Activated naive CD4-positive, alpha-beta T cell treated with anti-CD3 and anti-CD28 coated beads, Interleukin-2, amount 10 ng/mL, durations not matched to agents 7 days and 5 days (primary cell): ENCODE measurements at regions of chr17 and their contacts with region 1.

Region 1: DNA sequence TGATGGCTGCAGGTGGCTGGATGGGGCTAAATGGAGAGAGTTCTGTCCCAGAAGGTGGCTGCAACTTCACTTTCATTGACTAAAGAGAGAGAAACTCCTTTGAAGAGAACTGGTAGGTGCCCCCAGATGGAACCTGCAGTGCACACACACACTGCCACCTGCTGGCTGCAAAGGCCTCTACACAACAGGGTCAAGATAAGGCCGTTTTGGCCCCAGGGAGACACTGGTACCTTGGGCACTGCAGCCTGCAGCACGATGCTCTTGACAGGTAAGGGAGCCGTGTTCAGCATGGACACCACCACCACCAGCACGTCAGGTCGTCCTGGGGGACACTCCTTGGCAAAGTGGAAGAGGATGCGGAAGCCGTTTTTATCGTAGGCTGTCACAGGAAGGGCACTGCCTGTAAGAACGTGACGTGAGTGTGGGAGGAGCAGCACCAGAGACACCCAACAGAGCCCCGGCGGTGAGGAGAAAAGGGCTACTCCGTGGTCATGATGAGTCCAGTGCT is 22.7 kb downstream of the GGA3 start:
- DNase-seq: peak; percentile 72
- H3K4me3 Mint-ChIP-seq: peak overlapping the region; percentile 46
- H3K27ac Mint-ChIP-seq: peak overlapping the region; percentile 47
- H3K4me1 Mint-ChIP-seq: peaks cover 19% of the 10 kb centered on the region
- H3K27me3 Mint-ChIP-seq: no peaks in the 10 kb centered on the region

Region 2: DNA sequence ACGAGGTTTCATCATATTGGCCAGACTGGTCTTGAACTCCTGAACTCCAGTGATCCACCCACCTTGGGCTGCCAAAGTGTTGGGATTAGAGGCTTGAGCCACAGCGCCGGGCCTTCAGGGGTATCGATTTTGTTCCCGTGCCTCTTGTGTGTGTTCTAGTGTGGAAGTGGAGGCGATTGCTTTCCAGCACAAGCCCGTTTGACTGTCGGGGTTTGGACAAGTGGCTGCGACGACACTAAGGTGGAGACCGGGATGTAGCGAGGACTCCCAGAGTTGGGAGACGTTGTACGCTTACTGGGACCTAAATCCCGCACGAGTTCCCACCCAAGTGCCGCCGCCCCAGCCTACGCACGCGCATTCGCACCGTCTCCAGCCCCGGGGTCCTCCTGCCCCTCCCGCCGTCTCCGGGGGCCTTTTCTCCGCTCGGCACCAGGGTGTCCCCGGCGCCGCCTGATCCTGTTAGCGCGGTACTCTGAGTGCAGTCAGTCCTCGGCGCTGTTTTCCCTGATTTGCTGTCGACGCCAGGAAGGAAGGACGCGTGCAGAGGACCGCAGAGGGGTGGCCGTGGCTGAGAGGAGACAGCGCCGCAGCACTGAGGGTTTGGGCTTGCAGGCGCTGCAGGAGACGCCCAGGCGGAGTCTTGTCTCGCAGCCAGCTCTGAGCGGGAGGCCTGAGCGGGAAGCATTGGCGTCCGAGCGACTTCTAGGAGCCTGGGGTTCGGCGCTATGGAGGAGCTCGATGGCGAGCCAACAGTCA is 33.5 kb before region 1 on chr17 and contains the start of gene NUP85:
- CTCF ChIA-PET with region 1: interaction called, 10 read pairs
- DNase-seq: peak; percentile 94
- H3K4me3 Mint-ChIP-seq: peak within 1 kb of the TSS; percentile 95
- H3K27ac Mint-ChIP-seq: peak within 1 kb of the TSS; percentile 99
- H3K4me1 Mint-ChIP-seq: peaks cover 40% of the 10 kb centered on the region
- H3K27me3 Mint-ChIP-seq: no peaks in the 10 kb centered on the region

Region 3: GRCh38 chr17:75219815-75220214 is 18.9 kb before region 1 on chr17:
- CTCF ChIA-PET with region 1: interaction called, 15 read pairs
- DNase-seq: no peak
- H3K4me3 Mint-ChIP-seq: no peak overlapping the region
- H3K27ac Mint-ChIP-seq: no peak overlapping the region
- H3K4me1 Mint-ChIP-seq: no peaks in the 10 kb centered on the region
- H3K27me3 Mint-ChIP-seq: no peaks in the 10 kb centered on the region

Region 4: DNA sequence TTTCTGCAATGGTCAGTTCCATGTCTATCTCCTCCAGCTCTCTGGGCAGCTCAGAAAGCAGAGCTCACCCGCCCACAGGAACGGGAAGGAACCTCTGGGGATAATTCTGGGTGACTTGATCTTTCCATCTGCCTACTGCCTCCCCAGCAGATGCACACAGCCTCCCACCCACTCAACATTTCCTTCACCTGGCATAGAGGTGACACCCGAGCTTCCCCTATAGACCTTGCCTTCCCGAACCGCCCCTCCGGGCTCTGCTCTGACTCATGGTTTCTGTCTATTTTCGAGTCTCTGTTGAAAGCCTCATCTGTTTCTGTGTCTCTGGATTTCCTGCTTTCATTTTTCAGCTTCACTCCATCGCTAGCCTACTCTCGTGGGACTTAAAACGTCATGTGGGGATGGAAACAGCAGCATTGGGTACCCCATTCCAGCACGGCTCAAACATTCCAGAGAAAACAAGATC is 11.3 kb after region 1 on chr17:
- CTCF ChIA-PET with region 1: interaction called, 42 read pairs
- DNase-seq: peak; percentile 78
- H3K4me3 Mint-ChIP-seq: peak overlapping the region; percentile 64
- H3K27ac Mint-ChIP-seq: peak overlapping the region; percentile 90
- H3K4me1 Mint-ChIP-seq: peaks cover 40% of the 10 kb centered on the region
- H3K27me3 Mint-ChIP-seq: no peaks in the 10 kb centered on the region

Region 5: GRCh38 chr17:75261336-75262111 is 22.8 kb after region 1 on chr17 and contains the starts of genes GGA3 and MRPS7:
- CTCF ChIA-PET with region 1: interaction called, 25 read pairs
- DNase-seq: peak; percentile 97
- H3K4me3 Mint-ChIP-seq: peak within 1 kb of the TSS; percentile 97
- H3K27ac Mint-ChIP-seq: peak within 1 kb of the TSS; percentile 99
- H3K4me1 Mint-ChIP-seq: peaks cover 58% of the 10 kb centered on the region
- H3K27me3 Mint-ChIP-seq: no peaks in the 10 kb centered on the region

Region 6: DNA sequence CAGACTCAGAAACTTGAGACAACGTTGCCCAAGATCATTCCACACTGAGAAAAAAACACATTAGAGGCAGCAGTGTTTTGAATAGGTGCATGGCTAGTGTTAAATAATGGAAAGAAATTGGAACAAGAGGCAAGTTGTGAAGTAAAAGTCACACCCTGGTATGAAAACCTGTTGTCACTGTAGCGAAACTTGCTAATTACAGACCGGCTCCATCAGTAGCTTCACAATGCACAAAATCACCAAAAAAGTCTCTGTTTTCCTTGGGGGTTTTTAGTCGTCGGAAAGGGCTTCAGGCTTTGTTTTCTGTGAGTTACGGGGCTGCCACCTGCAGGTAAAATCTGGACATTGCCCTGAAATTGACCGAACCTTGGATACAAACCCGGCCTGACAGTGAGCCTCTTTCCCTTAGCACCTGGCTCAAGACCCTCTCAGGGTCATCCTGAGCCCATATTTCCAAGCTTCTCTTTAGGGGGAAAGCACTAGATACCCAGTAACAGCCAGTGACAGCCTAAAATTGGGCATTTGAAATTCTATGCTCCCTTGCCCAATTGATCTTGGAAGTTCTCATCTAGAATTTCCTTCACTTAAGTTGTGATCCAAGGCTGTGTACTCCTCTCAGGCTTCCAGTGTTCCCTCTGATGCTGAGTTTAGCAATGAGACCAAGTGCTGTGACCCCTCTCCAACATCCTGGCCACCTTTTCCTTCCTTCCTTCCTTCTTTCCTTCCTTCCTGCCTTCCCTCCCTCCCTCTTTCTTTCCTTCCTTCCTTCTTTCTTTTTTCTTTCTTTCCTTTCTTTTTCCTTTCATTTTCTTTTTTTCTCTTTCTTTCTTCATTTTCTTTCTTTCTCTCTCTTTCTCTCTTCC is 173.9 kb after region 1 on chr17:
- CTCF ChIA-PET with region 1: interaction called, 13 read pairs
- DNase-seq: peak; percentile 79
- H3K4me3 Mint-ChIP-seq: peak overlapping the region; percentile 13
- H3K27ac Mint-ChIP-seq: peak overlapping the region; percentile 64
- H3K4me1 Mint-ChIP-seq: peaks cover 29% of the 10 kb centered on the region
- H3K27me3 Mint-ChIP-seq: peaks cover 45% of the 10 kb centered on the region